AG04450 (cell line): ENCODE measurements at regions of chr22 and their contacts with region 1.

Region 1: DNA sequence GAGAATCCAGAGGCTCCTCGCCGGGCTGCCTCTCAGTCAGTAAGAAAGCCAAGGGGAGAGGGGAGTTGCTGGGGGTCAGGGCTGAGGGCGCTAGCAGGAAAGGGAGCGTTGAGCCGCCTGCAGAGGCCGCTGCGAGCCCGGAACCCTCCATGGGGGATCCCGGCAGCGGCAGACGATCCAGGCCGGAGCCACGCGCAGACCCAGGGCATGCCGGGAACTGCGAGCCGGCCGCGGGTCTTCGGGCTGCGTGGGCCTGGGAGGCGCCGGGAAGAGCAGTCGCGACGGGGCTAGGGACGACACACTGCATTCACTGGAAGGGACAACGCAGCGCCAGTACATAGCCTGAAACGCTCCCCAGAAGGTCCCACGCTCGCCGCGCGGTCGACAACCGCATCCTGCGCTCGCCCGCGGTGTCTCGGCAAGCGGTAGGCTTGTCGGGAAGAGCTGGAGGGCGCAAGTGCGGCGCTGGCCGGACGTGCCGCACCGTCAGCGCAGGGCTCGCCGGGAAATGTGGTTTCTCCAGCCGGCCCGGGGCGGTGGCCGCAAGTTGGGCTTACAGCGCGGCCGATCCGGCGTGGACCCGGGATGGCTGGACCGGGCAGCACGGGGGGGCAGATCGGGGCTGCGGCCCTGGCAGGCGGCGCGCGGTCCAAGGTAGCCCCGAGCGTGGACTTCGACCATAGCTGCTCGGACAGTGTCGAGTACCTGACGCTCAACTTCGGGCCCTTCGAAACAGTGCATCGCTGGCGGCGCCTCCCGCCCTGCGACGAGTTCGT is at the start of gene LZTR1:
- DNase-seq: peak; percentile 53
- H3K4me3 ChIP-seq: peak within 1 kb of the TSS; percentile 92
- H3K27ac ChIP-seq: peak within 1 kb of the TSS; percentile 75
- H3K27me3 ChIP-seq: no peaks in the 10 kb centered on the region
- CTCF ChIP-seq: peak; percentile 71
- polyA plus RNA-seq, gene LZTR1: 28.3 and 32.3 TPM in 2 replicates

Region 2: DNA sequence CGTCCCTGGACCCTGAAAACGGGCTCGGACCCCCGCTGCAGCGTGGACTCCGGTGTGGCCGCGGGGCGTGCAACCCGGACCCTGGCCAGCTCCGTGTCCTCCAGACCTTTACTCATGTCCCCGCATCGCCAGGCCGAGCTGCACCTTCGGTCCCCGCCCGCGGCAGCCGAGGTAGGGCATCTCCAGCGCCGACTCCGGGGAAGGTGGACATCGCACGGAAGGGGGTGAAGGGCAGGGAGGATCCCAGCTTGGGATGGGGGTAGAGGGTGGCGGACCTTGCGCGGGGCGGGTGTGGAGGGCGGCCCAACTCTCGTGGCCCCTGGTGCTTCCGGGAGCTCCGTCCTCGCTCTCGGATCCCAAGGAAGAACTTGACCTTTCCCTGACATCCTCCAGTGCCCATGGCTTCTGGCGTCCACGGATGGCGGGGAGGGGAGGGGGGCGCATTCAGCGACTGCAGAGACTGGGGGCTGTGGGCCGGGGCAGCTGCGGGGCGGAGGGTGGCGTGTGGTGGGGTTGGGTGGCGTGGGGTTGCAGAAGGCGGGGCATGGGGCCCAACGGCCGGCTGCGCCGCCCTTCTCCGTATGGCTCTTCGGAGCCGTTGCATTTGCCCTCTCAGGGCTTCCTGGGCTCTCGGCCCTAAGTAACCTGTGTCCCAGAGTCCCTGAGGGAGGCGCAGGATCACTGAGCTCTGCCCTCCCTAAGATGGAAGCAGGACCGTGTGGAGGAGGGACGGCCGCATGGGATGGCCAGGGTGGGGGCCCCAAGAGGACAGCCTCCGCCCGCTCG is 24.5 kb before region 1 on chr22:
- CTCF ChIA-PET with region 1: interaction called, 3 read pairs
- POLR2A ChIA-PET with region 1: interaction called, 15 read pairs
- DNase-seq: no peak
- H3K4me3 ChIP-seq: peak overlapping the region; percentile 70
- H3K27ac ChIP-seq: no peak overlapping the region
- H3K27me3 ChIP-seq: no peaks in the 10 kb centered on the region
- CTCF ChIP-seq: no peak

Region 3: GRCh38 chr22:20970939-20971657 is 10.9 kb before region 1 on chr22:
- CTCF ChIA-PET with region 1: interaction called, 3 read pairs
- POLR2A ChIA-PET with region 1: interaction called, 21 read pairs
- DNase-seq: no peak
- H3K4me3 ChIP-seq: no peak overlapping the region
- H3K27ac ChIP-seq: no peak overlapping the region
- H3K27me3 ChIP-seq: peaks cover 8% of the 10 kb centered on the region
- CTCF ChIP-seq: no peak

Region 4: DNA sequence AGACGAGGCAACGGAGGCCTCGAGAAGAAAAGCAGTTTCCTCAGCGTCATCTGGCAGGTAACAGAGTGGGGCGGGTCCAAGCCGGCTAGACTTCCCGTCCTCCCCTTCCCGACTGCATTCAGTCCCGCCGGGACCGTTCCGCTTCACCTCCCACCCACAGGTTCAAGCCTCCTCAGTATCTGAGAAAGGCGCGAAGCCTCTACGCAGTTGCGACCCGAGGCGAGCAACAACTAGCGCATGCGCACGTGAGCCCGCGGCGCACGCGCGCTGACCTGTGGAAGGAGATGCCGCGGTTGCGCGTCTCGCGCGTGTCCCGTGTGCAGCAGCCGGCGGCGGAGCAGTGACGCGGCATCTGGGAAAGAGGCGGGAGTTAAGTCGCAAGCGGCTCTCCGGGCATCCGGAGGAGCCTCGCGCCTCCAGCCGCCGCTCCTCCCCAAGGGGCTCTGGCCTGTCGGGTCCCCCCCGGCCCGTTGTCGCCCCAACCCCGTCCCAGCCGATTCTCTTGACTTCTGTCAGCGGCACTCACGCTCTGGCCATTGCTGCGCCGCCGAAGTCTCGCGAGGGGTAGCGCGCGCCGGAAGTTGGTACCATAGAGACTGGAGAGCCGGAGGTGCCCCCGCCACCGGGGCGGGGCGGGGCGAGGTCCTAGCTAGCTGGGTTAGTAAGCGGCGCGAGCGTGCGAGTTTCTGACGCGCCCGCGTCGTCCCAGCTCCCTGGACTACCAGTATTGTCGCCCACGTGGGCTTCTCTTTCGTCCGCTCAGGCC is 19.8 kb after region 1 on chr22 and contains the start of gene THAP7:
- CTCF ChIA-PET with region 1: no interaction called
- POLR2A ChIA-PET with region 1: interaction called, 15 read pairs
- DNase-seq: peak; percentile 92
- H3K4me3 ChIP-seq: peak within 1 kb of the TSS; percentile 85
- H3K27ac ChIP-seq: peak within 1 kb of the TSS; percentile 99
- H3K27me3 ChIP-seq: no peaks in the 10 kb centered on the region
- CTCF ChIP-seq: no peak
- polyA plus RNA-seq, gene THAP7: 12.5 and 15.1 TPM in 2 replicates